Endothelial cell of umbilical vein (primary cell): ENCODE measurements at regions of chr10 and their contacts with region 1.

Region 1: DNA sequence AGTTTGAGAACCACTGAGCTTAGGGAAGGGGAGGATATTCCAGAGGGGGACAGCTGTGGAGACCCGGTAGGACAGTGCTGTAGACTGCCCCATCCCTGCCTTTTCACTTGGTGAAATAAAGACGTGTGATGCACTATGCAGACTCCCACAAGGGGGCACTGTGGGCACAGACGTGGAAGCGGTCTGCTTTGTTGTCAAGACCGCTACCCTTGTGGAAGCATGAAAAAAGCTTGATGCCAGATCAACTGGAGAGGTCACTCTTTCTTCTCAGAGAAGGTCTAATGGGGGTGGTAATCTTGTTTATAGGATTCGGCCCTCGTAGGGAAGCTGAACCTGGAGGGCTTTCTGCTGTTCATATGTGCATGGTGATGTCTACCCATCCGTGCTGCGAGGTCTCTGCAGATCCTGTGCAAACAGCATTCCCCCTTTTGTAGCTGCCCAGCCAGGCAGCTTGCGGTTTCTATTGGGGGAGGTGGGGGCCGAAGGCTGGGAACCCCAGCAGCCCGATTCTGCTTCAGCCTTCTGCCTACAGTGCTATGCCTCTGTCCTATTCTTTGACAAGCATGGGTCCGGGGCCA is 13.7 kb downstream of the RPS24 start:
- DNase-seq: peak; percentile 86
- H3K4me3 ChIP-seq: no peak overlapping the region
- H3K27ac ChIP-seq: no peak overlapping the region
- H3K4me1 ChIP-seq: peaks cover 6% of the 10 kb centered on the region
- H3K27me3 ChIP-seq: no peaks in the 10 kb centered on the region
- CTCF ChIP-seq: peak; percentile 88 to 89
- POLR2A ChIP-seq: no peak

Region 2: GRCh38 chr10:78165617-78166016 is 118.2 kb after region 1 on chr10:
- CTCF ChIA-PET with region 1: interaction called, 5 read pairs
- POLR2A ChIA-PET with region 1: no interaction called
- dilution Hi-C with region 1: no loop called
- intact Hi-C with region 1: loop called (anchors 5 kb)
- DNase-seq: no peak
- H3K4me3 ChIP-seq: no peak overlapping the region
- H3K27ac ChIP-seq: no peak overlapping the region
- H3K4me1 ChIP-seq: no peaks in the 10 kb centered on the region
- H3K27me3 ChIP-seq: no peaks in the 10 kb centered on the region
- CTCF ChIP-seq: no peak
- POLR2A ChIP-seq: no peak

Region 3: DNA sequence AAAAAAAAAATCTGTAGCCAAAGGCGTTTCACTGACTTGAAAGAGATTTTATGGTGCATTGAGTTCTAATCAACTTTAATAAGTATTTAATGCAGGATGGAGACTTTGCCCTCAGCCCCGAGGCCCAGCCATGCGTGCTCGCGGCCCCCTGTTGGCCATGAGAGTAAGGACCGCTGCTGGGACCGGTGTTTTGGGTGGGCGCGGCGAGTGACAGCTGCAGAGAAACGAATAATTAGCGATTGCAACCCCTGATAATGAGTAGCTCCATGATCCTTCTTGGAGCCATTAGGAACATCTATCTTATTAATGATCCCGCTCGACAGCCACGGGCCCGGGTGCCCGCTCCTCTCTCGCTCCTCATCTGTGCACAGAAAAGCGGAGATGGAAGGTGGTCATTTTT is 333.7 kb after region 1 on chr10:
- CTCF ChIA-PET with region 1: no interaction called
- POLR2A ChIA-PET with region 1: no interaction called
- dilution Hi-C with region 1: no loop called
- intact Hi-C with region 1: loop called (anchors 2 kb)
- DNase-seq: no peak
- H3K4me3 ChIP-seq: no peak overlapping the region
- H3K27ac ChIP-seq: no peak overlapping the region
- H3K4me1 ChIP-seq: no peaks in the 10 kb centered on the region
- H3K27me3 ChIP-seq: peaks cover 2 to 11% of the 10 kb centered on the region in 2 experiments
- CTCF ChIP-seq: peak; percentile 40 to 57
- POLR2A ChIP-seq: no peak

Region 4: GRCh38 chr10:78520737-78521430 is 473.5 kb after region 1 on chr10:
- CTCF ChIA-PET with region 1: interaction called, 3 read pairs
- POLR2A ChIA-PET with region 1: no interaction called
- dilution Hi-C with region 1: no loop called
- intact Hi-C with region 1: loop called (anchors 1 kb)
- DNase-seq: peak; percentile 46
- H3K4me3 ChIP-seq: no peak overlapping the region
- H3K27ac ChIP-seq: no peak overlapping the region
- H3K4me1 ChIP-seq: no peaks in the 10 kb centered on the region
- H3K27me3 ChIP-seq: peaks cover 0 to 1% of the 10 kb centered on the region in 2 experiments
- CTCF ChIP-seq: peak in 1 of 2 donors; percentile 37
- POLR2A ChIP-seq: no peak

Region 5: GRCh38 chr10:79202188-79203013 is 1155.0 kb after region 1 on chr10:
- CTCF ChIA-PET with region 1: interaction called, 10 read pairs
- POLR2A ChIA-PET with region 1: no interaction called
- dilution Hi-C with region 1: no loop called
- intact Hi-C with region 1: loop called (anchors 1 kb)
- DNase-seq: peak; percentile 55
- H3K4me3 ChIP-seq: no peak overlapping the region
- H3K27ac ChIP-seq: no peak overlapping the region
- H3K4me1 ChIP-seq: no peaks in the 10 kb centered on the region
- H3K27me3 ChIP-seq: no peaks in the 10 kb centered on the region
- CTCF ChIP-seq: peak; percentile 77 to 84
- POLR2A ChIP-seq: no peak